ENCODE measurements at regions of chr1 and their contacts with region 1.

Region 1: DNA sequence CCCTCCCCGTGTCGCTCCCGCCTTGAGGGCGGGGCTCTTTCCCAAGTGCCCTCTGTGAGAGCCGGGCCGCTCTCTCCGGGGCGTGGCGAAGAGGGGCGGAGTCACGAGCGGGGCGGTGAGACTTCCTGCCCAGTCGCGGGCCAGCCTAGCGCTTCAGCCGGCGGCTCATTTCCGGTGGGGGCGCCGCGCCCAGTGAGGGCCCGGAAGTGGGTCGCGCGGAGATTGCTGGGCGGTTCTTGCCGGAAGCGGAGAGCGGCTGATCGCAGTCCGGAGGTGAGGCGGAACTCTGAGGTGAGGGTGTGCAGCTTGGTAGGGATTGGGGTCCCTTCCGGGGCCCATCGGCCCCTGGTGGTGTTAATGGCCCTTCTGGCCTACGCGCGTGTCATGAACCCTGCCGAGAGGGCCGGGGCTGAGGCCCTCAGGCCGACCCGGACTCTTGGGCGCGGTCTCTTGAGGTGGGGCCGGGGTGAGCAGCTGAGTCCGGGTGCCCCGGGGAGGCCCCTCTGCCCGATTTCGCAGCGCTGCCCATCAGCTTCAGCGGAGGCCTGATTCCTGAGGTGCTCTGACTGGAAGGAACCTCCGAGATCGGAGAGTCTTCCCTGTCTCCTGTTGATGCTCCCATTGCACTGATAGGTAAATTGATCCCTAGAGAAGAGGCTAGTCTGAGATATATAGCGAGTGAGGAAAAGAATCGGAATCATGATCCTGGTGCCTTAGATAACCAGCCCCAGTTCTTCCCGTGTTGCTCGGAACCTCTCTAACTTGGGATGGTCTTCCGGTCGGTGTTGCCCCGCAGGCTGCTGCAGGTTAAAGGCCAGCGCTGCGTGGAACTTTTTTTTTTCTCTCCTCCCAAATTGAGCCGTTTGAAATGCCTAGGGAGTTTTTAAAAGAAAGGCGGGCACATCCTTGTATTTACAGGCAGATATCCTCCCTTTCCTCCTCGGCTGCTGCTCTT is at the start of gene CAP1:
- DNase-seq: peak; percentile 100
- H3K4me3 Mint-ChIP-seq: peak within 1 kb of the TSS; percentile 88
- H3K27ac Mint-ChIP-seq: peak within 1 kb of the TSS; percentile 95
- H3K4me1 Mint-ChIP-seq: peaks cover 56% of the 10 kb centered on the region
- H3K27me3 Mint-ChIP-seq: no peaks in the 10 kb centered on the region
- total RNA-seq, gene CAP1: 890 to 908 TPM

Region 2: GRCh38 chr1:39882152-39882551 is 158.6 kb before region 1 on chr1:
- CTCF ChIA-PET with region 1: no interaction called
- POLR2A ChIA-PET with region 1: interaction called, 13 read pairs
- DNase-seq: no peak
- H3K4me3 Mint-ChIP-seq: peak overlapping the region; percentile 85
- H3K27ac Mint-ChIP-seq: no peak overlapping the region
- H3K4me1 Mint-ChIP-seq: peaks cover 35% of the 10 kb centered on the region
- H3K27me3 Mint-ChIP-seq: no peaks in the 10 kb centered on the region

Region 3: GRCh38 chr1:40014812-40015594 is 25.8 kb before region 1 on chr1:
- CTCF ChIA-PET with region 1: interaction called, 7 read pairs
- POLR2A ChIA-PET with region 1: interaction called, 10 read pairs
- DNase-seq: no peak
- H3K4me3 Mint-ChIP-seq: no peak overlapping the region
- H3K27ac Mint-ChIP-seq: no peak overlapping the region
- H3K4me1 Mint-ChIP-seq: peaks cover 14% of the 10 kb centered on the region
- H3K27me3 Mint-ChIP-seq: peaks cover 3% of the 10 kb centered on the region

Region 4: DNA sequence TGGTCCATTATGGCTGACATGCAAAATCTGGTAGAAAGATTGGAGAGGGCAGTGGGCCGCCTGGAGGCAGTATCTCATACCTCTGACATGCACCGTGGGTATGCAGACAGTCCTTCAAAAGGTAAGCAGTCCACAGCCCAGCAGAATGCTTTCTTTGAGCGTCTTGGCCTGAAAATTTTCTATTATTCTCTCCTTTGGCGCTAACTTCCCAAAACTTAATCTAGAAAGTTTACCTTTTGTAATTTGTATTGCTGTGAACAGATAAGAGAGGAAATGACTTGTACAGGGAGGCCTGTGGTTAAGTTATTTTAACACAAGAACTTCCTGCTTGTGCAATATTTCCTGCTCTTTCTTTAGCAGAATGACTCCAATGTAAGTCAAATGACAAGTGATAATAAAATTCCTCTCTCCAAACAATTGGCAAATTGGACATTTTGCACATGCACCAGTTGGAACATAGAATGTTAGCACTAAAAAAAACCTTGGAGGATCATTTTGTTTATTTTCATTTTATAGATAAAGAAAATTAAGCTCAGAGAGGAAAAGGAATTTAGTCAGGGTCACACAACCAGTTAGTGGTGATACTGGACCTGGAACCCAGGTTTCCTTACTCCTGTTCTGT is 18.7 kb after region 1 on chr1:
- CTCF ChIA-PET with region 1: interaction called, 5 read pairs
- POLR2A ChIA-PET with region 1: interaction called, 253 read pairs
- DNase-seq: peak; percentile 32
- H3K4me3 Mint-ChIP-seq: peak overlapping the region; percentile 45
- H3K27ac Mint-ChIP-seq: peak overlapping the region; percentile 88
- H3K4me1 Mint-ChIP-seq: peaks cover 90% of the 10 kb centered on the region
- H3K27me3 Mint-ChIP-seq: no peaks in the 10 kb centered on the region

Region 5: GRCh38 chr1:40130892-40131291 is 90.1 kb after region 1 on chr1:
- CTCF ChIA-PET with region 1: no interaction called
- POLR2A ChIA-PET with region 1: no interaction called
- DNase-seq: no peak
- H3K4me3 Mint-ChIP-seq: no peak overlapping the region
- H3K27ac Mint-ChIP-seq: no peak overlapping the region
- H3K4me1 Mint-ChIP-seq: peaks cover 6% of the 10 kb centered on the region
- H3K27me3 Mint-ChIP-seq: peaks cover 12% of the 10 kb centered on the region

Region 6: GRCh38 chr1:40373338-40374283 is 332.8 kb after region 1 on chr1 and contains the start of gene SMAP2:
- CTCF ChIA-PET with region 1: no interaction called
- POLR2A ChIA-PET with region 1: interaction called, 18 read pairs
- DNase-seq: peak; percentile 96
- H3K4me3 Mint-ChIP-seq: peak within 1 kb of the TSS; percentile 99
- H3K27ac Mint-ChIP-seq: peak within 1 kb of the TSS; percentile 99
- H3K4me1 Mint-ChIP-seq: peaks cover 49% of the 10 kb centered on the region
- H3K27me3 Mint-ChIP-seq: no peaks in the 10 kb centered on the region
- total RNA-seq, gene SMAP2: 172 to 173 TPM

Region 7: DNA sequence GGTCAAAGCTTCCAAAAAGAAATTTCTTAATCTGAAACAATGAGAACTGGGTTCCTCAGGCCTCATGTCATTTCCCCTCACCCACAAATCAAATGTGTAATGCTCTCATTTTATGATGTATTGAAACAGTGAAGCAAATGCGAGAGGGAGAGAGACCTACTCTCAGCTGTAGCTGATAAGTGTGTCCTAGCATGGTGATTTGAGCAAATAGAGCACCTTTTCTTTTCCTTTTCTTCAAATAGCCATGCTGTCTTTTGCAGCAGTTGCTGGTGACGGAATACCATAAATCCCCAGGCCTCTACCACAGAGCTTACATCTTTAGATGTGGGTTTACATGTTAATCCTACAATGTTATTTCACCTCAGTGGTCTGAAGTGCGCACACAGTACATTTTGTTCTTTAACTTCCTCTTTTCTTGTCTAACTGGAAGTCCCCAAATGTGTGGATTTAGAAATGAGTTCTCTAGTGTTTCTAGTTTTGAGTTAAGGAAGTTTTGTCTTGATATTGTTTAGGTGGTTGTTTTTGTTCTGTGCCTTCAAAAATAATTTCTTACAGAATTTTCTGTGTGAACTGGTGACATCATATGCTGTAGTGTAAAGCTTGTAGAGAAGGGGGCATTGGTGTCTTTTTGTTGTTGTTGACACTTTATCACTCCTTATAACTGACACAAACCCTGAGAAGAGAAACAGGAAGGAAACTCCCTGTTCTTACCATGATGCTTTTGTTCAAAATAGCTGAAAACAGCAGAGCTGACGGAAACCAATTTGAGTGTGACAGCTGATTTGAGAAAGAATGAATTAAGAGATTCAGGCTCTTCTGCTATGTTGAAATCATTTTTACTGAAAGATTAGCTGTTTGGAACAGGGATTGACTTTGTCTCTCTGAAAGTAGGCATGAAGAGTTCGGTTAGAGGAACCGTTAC is 344.9 kb after region 1 on chr1:
- CTCF ChIA-PET with region 1: no interaction called
- POLR2A ChIA-PET with region 1: interaction called, 38 read pairs
- DNase-seq: peak; percentile 59
- H3K4me3 Mint-ChIP-seq: peak overlapping the region; percentile 70
- H3K27ac Mint-ChIP-seq: peak overlapping the region; percentile 99
- H3K4me1 Mint-ChIP-seq: peaks cover 91% of the 10 kb centered on the region
- H3K27me3 Mint-ChIP-seq: no peaks in the 10 kb centered on the region